Sciatic nerve (tissue), 2 donors: ENCODE measurements at regions of chr10 and their contacts with region 1.

Region 1: DNA sequence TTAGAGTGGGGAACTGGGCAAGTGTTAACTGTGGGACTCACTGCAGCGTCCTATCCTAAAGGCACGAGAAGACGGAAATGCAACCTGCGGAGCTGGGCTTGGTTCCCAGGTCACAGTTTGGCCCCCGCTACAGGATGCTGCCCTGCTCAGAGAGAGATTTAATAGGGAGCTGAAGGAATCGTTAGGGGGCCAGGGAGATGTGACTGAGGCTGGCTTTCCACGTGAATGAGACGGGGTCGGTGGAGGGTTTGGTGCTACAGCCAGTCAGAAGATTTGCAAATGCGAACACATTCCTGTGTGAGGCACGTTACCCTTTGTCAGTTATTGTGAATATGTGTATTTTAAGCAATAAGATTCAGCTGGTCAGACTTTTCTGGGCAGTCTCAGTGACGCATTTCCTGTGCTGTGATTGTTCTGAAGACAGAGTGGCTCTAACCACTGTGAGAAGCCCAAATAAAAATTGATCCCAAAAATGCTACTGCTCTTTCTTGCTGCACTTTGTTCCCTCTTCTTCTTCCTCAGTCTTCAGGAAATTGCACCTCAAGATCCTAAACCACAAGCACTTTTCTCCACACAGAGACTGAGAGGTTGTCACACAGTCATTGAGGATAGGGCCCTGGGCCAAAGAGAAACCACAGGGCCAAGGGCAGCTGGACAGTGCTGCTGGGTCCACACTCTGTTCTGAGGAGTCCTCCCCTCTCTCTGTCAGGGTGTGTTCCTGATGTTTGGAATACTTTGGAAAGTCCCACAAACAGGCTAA is 21.2 kb downstream of the CYP17A1 start:
- DNase-seq: no peak
- ATAC-seq: peak; percentile 82

Region 2: DNA sequence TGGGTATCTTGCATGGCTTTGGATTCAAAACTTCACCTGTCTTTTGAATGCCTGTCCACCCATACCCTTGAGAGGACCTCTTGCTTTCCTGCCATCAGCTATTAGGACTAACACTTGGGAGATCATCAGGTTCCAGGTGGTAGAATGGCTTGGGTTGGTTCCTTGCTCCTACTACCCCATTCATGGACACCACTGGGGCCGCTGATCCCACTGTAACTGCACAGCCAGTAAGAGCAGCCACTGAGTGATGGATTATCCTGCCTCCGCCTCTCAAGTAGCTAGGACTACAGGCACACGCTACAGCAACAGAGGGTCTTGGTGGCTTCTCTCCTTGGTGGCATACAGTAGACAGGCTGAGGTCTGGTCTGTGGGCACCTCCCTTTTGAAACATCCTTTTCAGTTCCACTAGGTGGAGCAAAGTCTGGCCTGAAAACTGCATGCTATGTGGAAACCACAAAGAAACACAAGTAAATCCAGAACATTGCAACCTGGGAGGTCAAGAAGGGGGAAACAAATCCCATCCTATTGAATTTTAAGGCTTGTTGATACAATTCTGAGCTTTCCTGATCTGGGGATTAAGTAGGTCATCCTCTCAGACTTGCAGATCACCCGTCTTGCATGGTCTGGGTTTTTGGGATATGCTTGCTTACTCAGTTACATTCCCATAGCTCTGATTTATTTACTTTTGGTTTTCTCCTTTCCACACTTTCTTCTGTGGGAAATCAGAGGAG is 62.9 kb before region 1 on chr10:
- intact Hi-C with region 1: loop called (anchors 10 kb)
- DNase-seq: no peak
- ATAC-seq: peak; percentile 89

Region 3: GRCh38 chr10:104353325-104354048 is 1537.5 kb after region 1 on chr10 and contains the start of gene CFAP58:
- intact Hi-C with region 1: no loop called
- DNase-seq: peak; percentile 96
- ATAC-seq: peak; percentile 94
- total RNA-seq, gene CFAP58: 0.67 TPM